Posterior vena cava (tissue), 2 donors: ENCODE measurements at regions of chr6 and their contacts with region 1.

Region 1: DNA sequence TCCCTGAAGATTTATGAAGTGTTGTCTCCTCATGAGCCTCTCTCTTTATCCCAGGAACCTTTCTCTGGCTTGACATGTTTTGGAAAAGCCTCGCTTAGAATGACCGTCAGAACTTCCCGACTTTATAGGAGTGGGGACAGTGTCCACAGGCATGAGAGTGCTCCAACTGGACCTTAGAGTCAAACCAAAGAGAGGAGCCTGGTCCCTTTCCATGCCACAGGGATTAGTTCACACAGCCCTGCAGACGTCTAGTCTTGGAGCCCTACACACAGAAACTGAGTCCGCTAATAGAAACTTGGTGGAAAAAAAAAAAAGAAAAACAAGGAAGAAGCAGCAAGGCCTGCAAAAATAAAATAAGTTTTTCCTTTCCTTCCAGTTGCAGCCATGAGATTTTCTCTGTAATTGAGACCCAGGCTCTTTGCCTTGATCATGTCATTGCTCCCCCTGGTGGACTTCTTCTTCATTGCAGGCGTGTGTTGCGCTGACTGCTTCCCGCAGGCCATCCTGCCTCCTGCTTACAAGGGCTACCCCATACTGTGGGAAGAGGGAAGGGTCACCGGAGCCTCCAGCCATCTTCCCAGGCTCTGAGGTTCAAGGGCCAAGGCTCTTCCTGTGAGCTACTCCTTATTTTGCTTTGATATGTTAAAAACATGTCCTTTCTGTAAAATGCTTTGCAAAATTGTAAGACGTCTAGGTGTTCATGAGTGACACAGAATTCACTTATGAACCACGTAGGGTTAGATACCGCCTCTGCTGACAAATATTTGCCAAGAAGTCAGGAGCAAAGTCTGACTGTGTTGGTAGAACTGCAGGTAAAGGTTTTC is 201.0 kb downstream of the UST start:
- DNase-seq: peak; percentile 93

Region 2: DNA sequence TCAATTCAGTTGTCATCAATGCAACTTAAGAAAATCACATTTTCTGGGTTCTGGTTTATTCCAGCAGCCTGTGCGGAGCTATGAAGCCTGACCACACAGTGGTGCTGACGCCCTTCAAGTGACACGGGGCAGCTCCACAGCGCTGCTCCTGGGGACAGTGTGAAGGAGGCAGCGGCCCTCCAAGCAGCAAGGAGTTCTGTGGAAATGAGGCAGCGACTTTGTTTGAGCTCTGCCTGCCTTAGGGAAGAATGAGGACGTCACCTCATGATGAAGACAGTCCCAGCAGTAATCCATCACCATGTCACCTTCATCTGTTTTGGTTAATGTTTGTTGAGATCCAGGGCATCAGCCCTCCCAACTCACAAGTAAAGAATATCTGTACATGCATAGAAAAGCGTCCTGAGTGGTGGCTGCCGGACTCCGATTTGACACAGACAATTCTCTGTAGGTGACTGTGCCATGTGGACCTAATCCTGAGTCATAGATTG is 369.5 kb before region 1 on chr6:
- intact Hi-C with region 1: loop called (anchors 5 kb)
- DNase-seq: peak; percentile 92

Region 3: DNA sequence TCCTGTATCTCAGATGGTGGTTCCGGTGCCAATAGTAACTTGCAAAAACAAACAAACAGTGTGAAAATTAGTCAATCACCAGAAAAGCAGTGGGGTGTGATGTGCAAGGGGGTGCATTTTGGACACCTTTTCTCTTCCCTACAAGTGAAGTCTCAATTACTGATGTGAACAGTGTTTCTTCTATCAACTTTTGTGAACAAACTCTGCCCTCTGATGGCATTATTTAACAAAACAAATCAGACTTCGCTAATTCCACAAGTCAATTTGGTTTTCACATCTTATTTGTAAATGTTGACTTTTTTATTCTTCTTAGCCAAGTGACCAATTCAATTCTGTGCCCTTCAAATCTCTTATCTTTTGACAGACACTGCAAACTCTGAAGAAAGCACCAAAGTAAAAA is 11.2 kb after region 1 on chr6:
- intact Hi-C with region 1: no loop called
- DNase-seq: no peak

Region 4: GRCh38 chr6:149284904-149285303 is 337.1 kb after region 1 on chr6:
- intact Hi-C with region 1: no loop called
- DNase-seq: no peak